Sciatic nerve (tissue), 2 donors: ENCODE measurements at regions of chr7 and their contacts with region 1.

Region 1: DNA sequence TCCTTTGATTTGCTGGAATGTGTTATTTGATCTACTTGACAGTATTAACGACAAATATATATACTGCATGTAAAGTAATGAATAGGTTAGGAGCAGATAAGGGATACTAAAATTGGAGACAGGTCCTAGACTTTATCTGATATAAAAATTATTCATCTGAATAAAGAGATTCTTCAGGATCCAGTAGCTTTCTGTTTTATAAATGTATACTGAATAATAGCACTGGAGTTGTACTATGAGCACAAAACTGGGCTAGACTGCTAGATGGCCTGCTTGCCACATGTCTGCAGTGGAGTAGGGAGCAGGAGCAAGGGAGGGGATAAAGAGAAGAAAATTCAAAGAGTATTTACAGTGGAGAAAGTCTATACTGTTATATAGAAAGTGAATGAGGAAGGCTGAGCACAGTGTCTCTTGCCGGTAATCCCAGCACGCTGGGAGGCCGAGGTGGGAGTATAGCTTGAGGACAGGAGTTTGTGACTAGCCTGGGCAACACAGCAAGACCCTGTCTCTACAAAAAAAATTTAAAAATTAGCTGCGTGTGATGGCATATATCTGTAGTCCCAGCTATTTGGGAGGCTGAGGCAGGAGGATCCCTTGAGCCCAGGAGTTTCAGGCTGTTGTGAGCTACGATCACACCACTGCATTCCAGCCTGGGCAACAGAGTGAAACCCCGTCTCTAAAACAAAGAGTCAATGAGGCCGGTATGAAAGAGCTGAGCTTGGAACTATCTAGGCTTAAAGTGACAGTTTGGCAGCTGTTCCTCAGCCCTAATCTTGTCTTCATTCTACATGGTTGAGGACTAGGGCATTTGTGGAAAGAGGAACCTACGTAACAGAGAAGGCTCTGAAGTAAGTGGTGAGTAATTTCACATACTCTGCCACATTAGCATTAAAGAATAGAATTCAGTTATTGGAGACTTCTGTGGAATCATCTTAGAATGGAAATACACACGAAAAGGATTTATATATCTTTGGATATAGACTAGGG is 41.8 kb downstream of the CD36 start:
- DNase-seq: no peak
- ATAC-seq: peak; percentile 39

Region 2: GRCh38 chr7:80770675-80771081 is 90.5 kb after region 1 on chr7:
- intact Hi-C with region 1: no loop called
- DNase-seq: no peak
- ATAC-seq: no peak

Region 3: GRCh38 chr7:82428186-82428961 is 1748.2 kb after region 1 on chr7:
- intact Hi-C with region 1: loop called (anchors 5 kb)
- DNase-seq: no peak
- ATAC-seq: no peak